Heart right ventricle (tissue), 16 donors: ENCODE measurements at regions of chr4 and their contacts with region 1.

Region 1: DNA sequence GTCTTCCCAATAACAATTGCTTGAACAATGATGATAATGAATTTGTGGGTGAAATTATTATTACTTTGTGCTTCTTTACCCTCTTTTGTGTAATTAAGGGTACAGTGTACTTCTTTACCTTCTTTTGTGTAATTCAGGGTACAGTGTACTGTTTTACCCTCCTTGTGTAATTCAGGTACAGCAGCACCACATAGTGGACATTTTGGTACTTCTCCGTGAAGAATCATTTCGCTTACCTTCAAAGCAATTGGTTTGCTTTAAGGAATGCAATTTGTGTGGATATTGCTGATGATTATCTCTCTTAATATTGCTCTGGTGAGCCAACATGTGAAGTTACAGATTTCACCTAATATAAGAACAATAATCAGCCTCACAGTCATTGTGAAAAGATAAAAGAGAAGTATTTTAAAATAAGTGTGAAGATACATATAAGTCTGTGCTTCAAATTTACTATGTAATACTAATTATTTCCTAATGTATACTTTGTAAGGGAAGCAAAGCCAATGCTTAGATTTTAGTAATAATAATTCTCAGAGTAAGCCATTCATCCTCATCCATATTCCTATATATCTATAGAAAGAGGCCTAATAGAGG is 27.2 kb upstream of the SEC24B start:
- DNase-seq: peak in 1 of 2 donors; percentile 32
- ATAC-seq: peak in 5 of 8 donors; percentile 53 to 71 (median 64)
- H3K4me3 ChIP-seq: no peak overlapping the region
- H3K27ac ChIP-seq: no peak overlapping the region
- H3K4me1 ChIP-seq: peaks cover 0 to 2% (median 0%) of the 10 kb centered on the region in 9 donors
- H3K27me3 ChIP-seq: no peaks in the 10 kb centered on the region
- CTCF ChIP-seq: peak; percentile 50 to 82 (median 70)

Region 2: GRCh38 chr4:108683479-108683878 is 723.0 kb before region 1 on chr4:
- intact Hi-C with region 1: loop called in 5 of 10 experiments (anchors 10 kb)
- DNase-seq: no peak
- ATAC-seq: no peak
- H3K4me3 ChIP-seq: no peak overlapping the region
- H3K27ac ChIP-seq: no peak overlapping the region
- H3K4me1 ChIP-seq: no peaks in the 10 kb centered on the region
- H3K27me3 ChIP-seq: no peaks in the 10 kb centered on the region
- CTCF ChIP-seq: peak in 6 of 9 donors; percentile 20 to 44 (median 32)

Region 3: DNA sequence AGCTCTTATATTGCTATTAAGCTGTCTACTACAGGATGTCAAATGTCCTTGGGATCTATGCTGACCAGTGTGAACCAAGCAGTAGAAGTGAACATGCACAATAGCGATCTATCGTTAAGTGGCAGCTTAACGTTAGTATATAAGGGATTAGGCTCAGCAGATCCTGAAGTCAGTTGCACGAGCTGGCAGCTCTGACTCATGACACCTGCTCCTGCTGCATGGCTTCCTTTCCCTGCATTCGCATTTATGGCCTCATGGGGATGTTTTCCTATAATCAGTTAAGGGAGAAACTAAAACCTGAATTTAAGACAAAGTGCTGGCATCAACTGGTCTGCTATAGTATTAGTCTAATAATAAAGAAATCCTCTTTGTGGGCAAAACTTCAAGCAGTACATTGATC is 141.0 kb after region 1 on chr4:
- intact Hi-C with region 1: no loop called
- DNase-seq: no peak
- ATAC-seq: no peak
- H3K4me3 ChIP-seq: no peak overlapping the region
- H3K27ac ChIP-seq: no peak overlapping the region
- H3K4me1 ChIP-seq: peaks cover 0 to 20% (median 0%) of the 10 kb centered on the region in 9 donors
- H3K27me3 ChIP-seq: no peaks in the 10 kb centered on the region
- CTCF ChIP-seq: no peak